ENCODE measurements at regions of chr19 and their contacts with region 1.

Region 1: DNA sequence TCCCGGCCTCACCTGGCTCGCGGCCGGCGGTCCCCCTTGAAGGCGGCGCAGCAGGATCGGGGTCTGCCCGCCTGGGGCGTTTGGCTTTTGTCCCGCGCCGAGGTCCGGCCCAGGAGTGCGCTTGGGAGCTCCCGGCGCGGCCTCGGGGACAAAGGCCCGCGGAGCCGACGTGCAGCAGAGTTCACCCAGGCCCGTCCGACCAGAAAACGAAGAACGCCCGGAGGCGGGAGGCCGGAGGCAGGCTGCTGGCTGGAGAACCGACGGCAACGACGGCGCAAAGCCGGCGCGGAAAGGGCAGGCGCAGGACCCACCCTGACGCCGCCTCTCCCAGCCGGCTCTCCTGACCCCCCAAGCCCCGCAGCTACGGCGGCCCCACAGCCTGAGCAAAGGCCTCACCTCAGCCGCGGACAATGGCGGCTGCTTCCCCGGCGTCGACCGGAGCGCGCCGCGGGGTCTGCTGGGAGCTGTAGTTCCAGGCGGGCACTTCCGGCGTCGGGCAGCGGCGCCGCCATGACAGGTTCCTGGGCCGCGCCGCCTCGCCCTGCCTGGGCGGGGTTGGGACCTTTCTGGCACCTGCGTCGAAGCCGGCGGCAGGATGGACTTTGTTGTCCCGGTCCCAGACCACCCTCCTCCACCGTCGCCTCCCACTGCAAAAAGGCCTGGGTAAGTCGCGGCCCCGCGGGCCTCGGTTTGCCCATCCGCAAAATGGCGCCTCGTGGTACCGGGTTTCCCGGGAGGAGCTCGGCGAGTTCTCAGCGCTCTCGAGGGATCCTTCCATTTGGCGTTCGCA is at the start of gene ZNF606:
- DNase-seq: peak; percentile 66 to 91 (median 83)
- H3K4me3 ChIP-seq: peak within 1 kb of the TSS; percentile 64 to 100 (median 92)
- H3K27ac ChIP-seq: peak within 1 kb of the TSS; percentile 36 to 97 (median 92)
- H3K27me3 ChIP-seq: no peaks in the 10 kb centered on the region
- CTCF ChIP-seq: peak in 28 of 56 donors; percentile 6 to 53 (median 34)
- total RNA-seq, gene ZNF606: 14.4 to 48.2 (median 23.9) TPM

Region 2: DNA sequence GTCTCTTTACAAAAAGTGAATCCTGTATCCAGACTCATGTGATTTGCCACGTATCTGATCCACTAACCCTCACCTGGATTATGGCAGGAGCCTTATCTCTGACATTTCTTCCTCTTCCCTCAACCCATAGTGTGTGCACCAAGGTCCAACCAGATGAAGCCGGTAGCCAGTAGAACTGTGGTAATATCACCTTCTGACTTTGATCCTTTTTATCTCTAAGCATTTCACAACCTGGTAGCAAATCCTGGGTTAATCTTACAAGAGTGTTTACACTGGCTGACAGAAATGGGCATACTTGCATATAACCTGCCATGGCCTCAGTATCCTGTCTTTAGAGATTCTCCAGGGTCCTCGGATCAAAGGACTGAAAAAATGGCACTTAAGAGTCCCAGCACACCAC is 88.0 kb before region 1 on chr19:
- intact Hi-C with region 1: loop called in 1 of 2 experiments (anchors 5 kb)
- DNase-seq: no peak
- H3K4me3 ChIP-seq: peak overlapping the region in 9 of 59 donors; percentile 17 to 96 (median 91)
- H3K27ac ChIP-seq: no peak overlapping the region
- H3K27me3 ChIP-seq: no peaks in the 10 kb centered on the region
- CTCF ChIP-seq: no peak

Region 3: DNA sequence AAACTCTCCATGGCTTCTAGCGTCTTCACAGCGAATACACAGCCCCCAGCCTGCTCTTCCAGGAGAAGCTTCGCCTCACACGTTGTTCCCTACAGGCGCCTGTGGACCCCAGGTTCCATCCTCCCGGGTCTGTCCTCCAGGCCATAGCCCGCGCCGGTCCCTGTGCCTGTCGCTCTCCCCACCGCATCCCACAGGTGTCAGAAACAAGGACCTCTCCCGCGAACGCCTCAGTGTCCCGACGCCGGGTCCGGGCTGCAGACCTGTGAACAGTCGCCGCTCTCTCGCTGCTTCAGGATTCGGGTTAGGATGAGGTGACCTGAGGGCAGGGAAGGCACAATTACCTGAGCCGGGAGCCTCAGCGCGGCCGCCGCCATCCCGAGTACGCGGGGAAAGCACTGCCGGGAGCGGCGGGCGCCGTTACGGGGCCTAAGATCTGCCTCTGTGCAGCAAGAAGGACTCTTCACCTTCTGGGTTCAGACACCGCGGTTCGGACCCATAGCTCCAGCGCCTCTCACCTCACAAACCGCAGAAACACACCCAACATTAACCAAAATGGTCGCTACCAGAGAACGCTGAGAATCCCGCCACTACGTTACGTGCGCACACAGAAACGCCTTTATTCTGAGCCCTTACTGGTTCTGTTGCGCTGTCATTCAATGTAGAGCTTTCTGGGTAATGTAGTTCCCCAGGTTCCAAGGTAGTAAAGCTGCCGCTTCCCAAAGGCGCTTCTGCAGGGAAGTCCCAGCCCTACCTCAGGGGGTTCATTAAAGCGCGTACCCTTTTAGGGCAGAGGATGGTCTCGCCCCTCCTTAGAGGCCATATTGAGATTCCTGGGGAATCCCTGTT is 67.5 kb before region 1 on chr19 and contains the start of gene ZNF418:
- intact Hi-C with region 1: loop called in 1 of 2 experiments (anchors 5 kb)
- DNase-seq: peak; percentile 53 to 91 (median 80)
- H3K4me3 ChIP-seq: peak within 1 kb of the TSS; percentile 64 to 98 (median 89)
- H3K27ac ChIP-seq: peak within 1 kb of the TSS in 58 of 59 donors; percentile 50 to 96 (median 86)
- H3K27me3 ChIP-seq: no peaks in the 10 kb centered on the region
- CTCF ChIP-seq: peak in 13 of 56 donors; percentile 7 to 41 (median 26)
- total RNA-seq, gene ZNF418: 22.6 to 50.8 (median 34.9) TPM

Region 4: GRCh38 chr19:57947208-57948134 is 55.1 kb before region 1 on chr19 and contains the start of gene ZNF256:
- intact Hi-C with region 1: loop called in 1 of 2 experiments (anchors 5 kb)
- DNase-seq: peak; percentile 89 to 98 (median 96)
- H3K4me3 ChIP-seq: peak within 1 kb of the TSS; percentile 67 to 99 (median 95)
- H3K27ac ChIP-seq: peak within 1 kb of the TSS in 50 of 59 donors; percentile 2 to 86 (median 65)
- H3K27me3 ChIP-seq: no peaks in the 10 kb centered on the region
- CTCF ChIP-seq: peak; percentile 63 to 88 (median 78)
- total RNA-seq, gene ZNF256: 6.9 to 14.5 (median 10.6) TPM

Region 5: GRCh38 chr19:57964748-57965147 is 37.8 kb before region 1 on chr19:
- intact Hi-C with region 1: no loop called
- DNase-seq: no peak
- H3K4me3 ChIP-seq: no peak overlapping the region
- H3K27ac ChIP-seq: no peak overlapping the region
- H3K27me3 ChIP-seq: no peaks in the 10 kb centered on the region
- CTCF ChIP-seq: no peak

Region 6: GRCh38 chr19:58091251-58091995 is 88.8 kb after region 1 on chr19:
- intact Hi-C with region 1: no loop called
- DNase-seq: no peak
- H3K4me3 ChIP-seq: no peak overlapping the region
- H3K27ac ChIP-seq: no peak overlapping the region
- H3K27me3 ChIP-seq: no peaks in the 10 kb centered on the region
- CTCF ChIP-seq: no peak